Posterior cingulate gyrus (tissue), 11 donors: ENCODE measurements at regions of chr9 and their contacts with region 1.

Region 1: GRCh38 chr9:135480942-135481314 is 1.3 kb downstream of the PPP1R26 start:
- DNase-seq: no peak

Region 2: DNA sequence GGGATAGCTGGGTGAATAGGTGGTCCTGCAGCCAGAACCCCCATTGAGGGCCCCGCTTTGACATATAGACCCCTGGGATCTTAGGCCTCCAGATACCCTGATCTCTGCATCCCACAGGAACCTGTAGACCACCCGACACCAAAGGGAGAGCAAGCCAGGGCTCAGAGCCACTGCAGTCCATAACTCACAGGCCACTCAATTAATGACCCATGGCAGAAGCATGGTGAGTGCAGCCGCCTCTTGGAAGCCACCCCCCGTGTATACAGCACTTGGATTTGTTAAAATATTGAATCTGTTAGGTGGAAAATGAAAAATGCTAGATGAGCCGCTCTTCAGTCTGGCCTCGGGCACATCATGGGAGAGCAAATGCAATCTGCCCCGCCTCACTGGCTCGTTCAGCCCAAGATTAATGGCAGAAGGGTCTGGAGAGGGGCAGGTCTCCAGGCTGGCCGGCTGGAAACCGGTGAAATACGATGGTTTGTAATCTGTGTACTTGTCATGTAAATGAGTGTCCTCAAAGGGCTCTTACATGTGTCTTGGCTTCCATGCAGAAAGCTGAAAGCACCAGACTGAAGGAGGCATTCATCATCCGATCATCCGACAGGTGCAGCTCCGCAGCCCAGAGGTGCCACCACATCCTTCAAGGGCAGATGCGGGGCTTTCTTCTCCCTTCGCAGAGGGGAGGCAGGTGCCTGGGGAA is 282.2 kb before region 1 on chr9:
- intact Hi-C with region 1: no loop called
- DNase-seq: no peak

Region 3: GRCh38 chr9:135492886-135493669 is 12.2 kb after region 1 on chr9:
- intact Hi-C with region 1: loop called (anchors 1 kb)
- DNase-seq: peak in 4 of 10 donors; percentile 20 to 72 (median 64)